Activated CD8-positive, alpha-beta T cell treated with anti-CD3 and anti-CD28 coated beads, Interleukin-2, amount 10 ng/mL, durations not matched to agents 7 days and 5 days (primary cell): ENCODE measurements at regions of chr5 and their contacts with region 1.

Region 1: DNA sequence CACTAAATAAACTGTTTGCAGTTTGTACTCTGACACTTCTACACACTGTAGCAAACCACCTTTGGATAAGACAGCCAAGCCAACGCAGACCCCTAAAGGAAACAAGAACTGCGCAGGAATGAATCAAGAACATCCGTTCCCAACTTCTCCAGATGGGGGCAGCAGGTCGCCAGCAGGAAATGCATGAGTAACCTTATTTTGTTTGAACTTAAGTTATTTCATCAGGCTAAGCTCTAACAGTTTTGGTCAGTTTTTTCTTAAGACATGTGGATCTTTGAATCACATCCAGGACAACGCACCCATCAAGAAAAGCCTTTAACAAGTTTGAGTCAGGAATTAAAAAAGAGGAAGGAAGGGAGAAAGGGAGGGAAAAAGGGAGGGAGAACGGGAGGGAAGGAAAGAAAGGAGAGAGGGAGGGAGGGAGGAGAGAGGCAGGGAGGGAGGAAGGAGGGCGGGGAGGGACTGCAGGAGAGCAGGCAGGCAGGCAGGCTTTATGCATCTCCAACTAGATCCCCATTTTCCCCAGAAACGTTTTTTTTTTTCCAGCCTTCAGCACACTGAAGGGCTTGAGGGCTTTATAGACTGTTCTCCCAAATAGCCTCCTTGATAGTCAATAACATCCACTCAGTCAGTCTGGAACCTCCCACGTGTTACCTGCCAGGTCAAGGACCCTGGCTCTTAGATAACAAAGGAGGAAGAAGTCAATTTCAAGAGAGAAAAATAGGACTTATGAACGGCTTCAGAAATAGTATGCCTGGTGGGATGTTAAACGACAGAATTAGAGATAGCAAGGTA is 22.2 kb downstream of the BHMT start:
- DNase-seq: peak; percentile 81
- ATAC-seq: peak; percentile 77
- H3K4me3 Mint-ChIP-seq: peak overlapping the region; percentile 48
- H3K27ac Mint-ChIP-seq: peak overlapping the region; percentile 75
- H3K4me1 Mint-ChIP-seq: peaks cover 13% of the 10 kb centered on the region
- H3K27me3 Mint-ChIP-seq: peaks cover 2% of the 10 kb centered on the region

Region 2: GRCh38 chr5:78899922-78900362 is 233.9 kb before region 1 on chr5:
- CTCF ChIA-PET with region 1: interaction called, 29 read pairs
- POLR2A ChIA-PET with region 1: no interaction called
- DNase-seq: peak; percentile 28
- ATAC-seq: no peak
- H3K4me3 Mint-ChIP-seq: no peak overlapping the region
- H3K27ac Mint-ChIP-seq: no peak overlapping the region
- H3K4me1 Mint-ChIP-seq: no peaks in the 10 kb centered on the region
- H3K27me3 Mint-ChIP-seq: no peaks in the 10 kb centered on the region

Region 3: GRCh38 chr5:78984439-78985115 is 149.3 kb before region 1 on chr5:
- CTCF ChIA-PET with region 1: interaction called, 14 read pairs
- POLR2A ChIA-PET with region 1: no interaction called
- DNase-seq: peak; percentile 80
- ATAC-seq: peak; percentile 71
- H3K4me3 Mint-ChIP-seq: peak overlapping the region; percentile 89
- H3K27ac Mint-ChIP-seq: peak overlapping the region; percentile 95
- H3K4me1 Mint-ChIP-seq: peaks cover 45% of the 10 kb centered on the region
- H3K27me3 Mint-ChIP-seq: no peaks in the 10 kb centered on the region

Region 4: GRCh38 chr5:79030663-79031484 is 103.0 kb before region 1 on chr5:
- CTCF ChIA-PET with region 1: interaction called, 368 read pairs
- POLR2A ChIA-PET with region 1: no interaction called
- DNase-seq: no peak
- ATAC-seq: no peak
- H3K4me3 Mint-ChIP-seq: no peak overlapping the region
- H3K27ac Mint-ChIP-seq: no peak overlapping the region
- H3K4me1 Mint-ChIP-seq: no peaks in the 10 kb centered on the region
- H3K27me3 Mint-ChIP-seq: peaks cover 10% of the 10 kb centered on the region

Region 5: GRCh38 chr5:79107020-79107796 is 26.6 kb before region 1 on chr5:
- CTCF ChIA-PET with region 1: interaction called, 22 read pairs
- POLR2A ChIA-PET with region 1: no interaction called
- DNase-seq: no peak
- ATAC-seq: no peak
- H3K4me3 Mint-ChIP-seq: no peak overlapping the region
- H3K27ac Mint-ChIP-seq: no peak overlapping the region
- H3K4me1 Mint-ChIP-seq: peaks cover 8% of the 10 kb centered on the region
- H3K27me3 Mint-ChIP-seq: peaks cover 36% of the 10 kb centered on the region

Region 6: GRCh38 chr5:79151942-79152671 is 18.3 kb after region 1 on chr5:
- CTCF ChIA-PET with region 1: interaction called, 11 read pairs
- POLR2A ChIA-PET with region 1: no interaction called
- DNase-seq: no peak
- ATAC-seq: no peak
- H3K4me3 Mint-ChIP-seq: no peak overlapping the region
- H3K27ac Mint-ChIP-seq: no peak overlapping the region
- H3K4me1 Mint-ChIP-seq: no peaks in the 10 kb centered on the region
- H3K27me3 Mint-ChIP-seq: peaks cover 5% of the 10 kb centered on the region

Region 7: GRCh38 chr5:79471556-79471955 is 337.7 kb after region 1 on chr5:
- CTCF ChIA-PET with region 1: interaction called, 112 read pairs
- POLR2A ChIA-PET with region 1: no interaction called
- DNase-seq: no peak
- ATAC-seq: no peak
- H3K4me3 Mint-ChIP-seq: no peak overlapping the region
- H3K27ac Mint-ChIP-seq: no peak overlapping the region
- H3K4me1 Mint-ChIP-seq: no peaks in the 10 kb centered on the region
- H3K27me3 Mint-ChIP-seq: peaks cover 3% of the 10 kb centered on the region